Colonic mucosa (tissue), 4 donors: ENCODE measurements at regions of chr20 and their contacts with region 1.

Region 1: DNA sequence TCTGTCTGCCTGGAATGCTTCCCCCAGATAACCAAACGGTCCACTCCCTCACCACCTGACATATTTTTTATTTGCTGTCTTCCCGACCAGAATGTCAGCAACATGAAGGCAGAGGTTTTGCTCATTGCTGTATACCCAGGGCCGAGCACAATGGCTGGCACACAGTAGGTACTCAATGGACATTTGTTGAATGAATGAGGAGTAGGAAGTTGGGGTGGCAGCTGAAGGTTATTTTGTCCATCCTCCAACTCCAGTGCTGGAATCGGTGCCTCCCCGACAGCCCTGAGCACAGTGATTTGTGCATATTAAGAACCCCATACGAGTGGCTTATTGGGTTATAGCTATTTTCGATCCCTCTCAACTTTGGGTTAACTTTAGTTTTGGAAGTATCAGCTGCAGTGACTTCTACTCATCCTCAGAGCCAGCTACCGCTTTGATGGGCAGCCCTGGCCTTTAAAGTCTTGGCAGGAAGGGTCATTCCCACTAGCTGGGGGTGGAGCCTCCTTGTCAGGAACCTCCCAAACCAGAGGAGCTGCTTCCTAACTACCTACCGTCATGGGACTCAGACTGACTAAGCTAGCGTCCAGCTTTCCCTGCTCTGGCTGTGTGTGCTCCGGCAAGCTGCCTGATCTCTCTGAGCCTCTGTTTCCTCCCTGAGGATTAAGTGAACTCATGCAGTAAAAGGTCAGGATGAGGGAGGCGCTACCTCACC is 10.2 kb downstream of the DUSP15 start:
- DNase-seq: no peak
- H3K4me3 ChIP-seq: no peak overlapping the region
- H3K27ac ChIP-seq: no peak overlapping the region
- H3K4me1 ChIP-seq: peaks cover 7% of the 10 kb centered on the region
- H3K27me3 ChIP-seq: peaks cover 4% of the 10 kb centered on the region
- CTCF ChIP-seq: no peak

Region 2: DNA sequence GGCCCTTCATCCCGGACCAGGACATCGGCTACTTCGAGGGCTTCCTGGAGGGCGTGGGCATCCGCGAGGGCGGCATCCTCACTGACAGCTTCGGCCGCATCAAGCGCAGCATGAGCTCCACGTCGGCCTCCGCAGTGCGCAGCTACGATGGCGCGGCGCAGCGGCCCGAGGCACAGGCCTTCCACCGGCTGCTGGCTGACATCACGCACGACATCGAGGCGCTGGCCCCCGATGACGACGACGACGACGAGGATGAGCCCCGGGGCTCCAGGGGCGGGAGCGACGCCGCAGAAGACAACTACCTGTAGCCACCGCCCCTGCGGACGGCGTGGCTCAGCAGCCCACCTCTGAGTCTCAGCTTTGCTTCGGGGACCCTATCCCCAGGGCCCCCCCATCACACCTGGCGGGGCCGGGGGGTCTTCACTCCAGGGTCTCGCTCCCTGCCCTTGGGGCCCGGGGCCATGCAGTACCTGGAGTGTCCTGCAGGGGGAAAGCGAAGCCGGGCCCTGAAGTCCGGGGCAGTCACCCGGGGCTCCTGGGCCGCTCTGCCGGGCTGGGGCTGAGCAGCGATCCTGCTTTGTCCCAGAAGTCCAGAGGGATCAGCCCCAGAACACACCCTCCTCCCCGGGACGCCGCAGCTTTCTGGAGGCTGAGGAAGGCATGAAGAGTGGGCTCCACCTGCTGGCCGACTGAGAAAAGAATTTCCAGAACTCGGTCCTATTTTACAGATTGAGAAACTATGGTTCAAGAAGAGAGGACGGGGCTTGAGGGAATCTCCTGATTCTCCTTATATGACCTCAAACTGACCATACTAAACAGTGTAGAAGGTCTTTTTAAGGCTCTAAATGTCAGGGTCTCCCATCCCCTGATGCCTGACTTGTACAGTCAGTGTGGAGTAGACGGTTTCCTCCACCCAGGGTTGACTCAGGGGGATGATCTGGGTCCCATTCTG is 171.1 kb after region 1 on chr20:
- intact Hi-C with region 1: loop called (anchors 10 kb)
- DNase-seq: peak; percentile 75
- H3K4me3 ChIP-seq: peak overlapping the region; percentile 15
- H3K27ac ChIP-seq: no peak overlapping the region
- H3K4me1 ChIP-seq: no peaks in the 10 kb centered on the region
- H3K27me3 ChIP-seq: peaks cover 4% of the 10 kb centered on the region
- CTCF ChIP-seq: peak; percentile 93

Region 3: DNA sequence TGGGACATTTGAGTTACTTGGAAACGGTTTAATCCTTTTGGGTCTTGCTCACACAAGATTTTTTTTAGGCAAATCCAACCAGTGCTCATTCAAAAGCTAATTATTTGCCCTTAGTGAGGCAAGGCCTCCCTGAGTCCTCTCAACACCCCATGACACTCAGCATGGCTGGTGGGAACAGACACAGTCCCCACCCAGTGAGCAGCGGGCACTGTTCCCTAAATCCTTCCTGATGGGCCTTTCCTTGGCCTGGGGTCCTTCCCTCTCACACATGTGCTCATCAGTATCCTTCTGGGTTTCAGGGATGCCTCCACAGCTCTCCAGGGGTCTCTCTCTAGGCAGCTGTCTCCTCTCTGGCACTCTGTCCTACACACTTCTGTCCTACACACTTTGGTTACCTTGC is 319.4 kb after region 1 on chr20:
- intact Hi-C with region 1: no loop called
- DNase-seq: no peak
- H3K4me3 ChIP-seq: no peak overlapping the region
- H3K27ac ChIP-seq: no peak overlapping the region
- H3K4me1 ChIP-seq: no peaks in the 10 kb centered on the region
- H3K27me3 ChIP-seq: no peaks in the 10 kb centered on the region
- CTCF ChIP-seq: no peak